A549 (cell line): ENCODE measurements at regions of chr16 and their contacts with region 1.

Region 1: DNA sequence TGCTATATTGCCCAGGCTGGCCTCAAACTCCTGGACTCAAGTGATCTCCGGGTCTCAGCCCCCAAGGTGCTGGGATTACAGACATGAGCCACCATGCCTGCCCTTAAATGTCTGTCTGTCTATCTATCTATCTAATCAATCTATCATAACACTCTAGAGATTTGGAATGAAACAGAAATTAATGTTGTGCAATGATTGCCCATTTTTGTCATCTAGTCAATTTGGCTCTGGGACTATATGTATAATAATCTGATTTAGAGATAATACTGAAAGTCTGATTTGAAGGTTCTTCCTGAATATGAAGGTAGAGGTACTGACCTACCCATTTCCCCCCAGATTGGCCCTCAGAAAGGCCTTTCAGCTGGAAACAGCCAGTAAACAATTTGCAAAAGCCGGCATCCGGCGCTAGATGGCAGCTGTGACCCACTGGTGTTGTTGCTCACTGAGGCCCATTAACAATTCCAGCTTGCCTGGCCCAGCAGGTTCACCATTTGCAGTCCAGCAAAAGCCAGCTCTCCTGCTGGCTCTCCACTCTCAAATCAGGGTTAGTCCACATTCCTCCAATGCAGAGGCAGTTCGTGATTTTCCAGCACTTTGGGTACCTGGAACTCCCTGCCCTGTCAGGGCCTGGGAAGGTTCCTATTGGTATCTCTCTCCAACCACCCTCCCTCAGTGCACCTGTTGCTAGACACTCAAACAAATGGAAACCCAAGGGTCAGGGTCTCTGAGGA is 22.9 kb upstream of the C16orf87 start:
- DNase-seq: peak; percentile 74 to 75
- ATAC-seq: peak; percentile 91
- H3K4me3 ChIP-seq: no peak overlapping the region
- H3K27ac ChIP-seq: no peak overlapping the region
- H3K4me1 ChIP-seq: no peaks in the 10 kb centered on the region
- CTCF ChIP-seq: peak; percentile 93
- EP300 ChIP-seq: no peak
- POLR2A ChIP-seq: no peak
- RAD21 ChIP-seq: peak; percentile 94 to 96

Region 2: GRCh38 chr16:46736695-46737094 is 117.2 kb before region 1 on chr16:
- CTCF ChIA-PET with region 1: no interaction called
- POLR2A ChIA-PET with region 1: no interaction called
- DNase-seq: no peak
- ATAC-seq: peak in 1 of 2 experiments; percentile 24; a peak in 1 of 6 replicates
- H3K4me3 ChIP-seq: no peak overlapping the region
- H3K27ac ChIP-seq: no peak overlapping the region
- H3K4me1 ChIP-seq: no peaks in the 10 kb centered on the region
- CTCF ChIP-seq: no peak
- EP300 ChIP-seq: no peak
- POLR2A ChIP-seq: no peak
- RAD21 ChIP-seq: no peak

Region 3: DNA sequence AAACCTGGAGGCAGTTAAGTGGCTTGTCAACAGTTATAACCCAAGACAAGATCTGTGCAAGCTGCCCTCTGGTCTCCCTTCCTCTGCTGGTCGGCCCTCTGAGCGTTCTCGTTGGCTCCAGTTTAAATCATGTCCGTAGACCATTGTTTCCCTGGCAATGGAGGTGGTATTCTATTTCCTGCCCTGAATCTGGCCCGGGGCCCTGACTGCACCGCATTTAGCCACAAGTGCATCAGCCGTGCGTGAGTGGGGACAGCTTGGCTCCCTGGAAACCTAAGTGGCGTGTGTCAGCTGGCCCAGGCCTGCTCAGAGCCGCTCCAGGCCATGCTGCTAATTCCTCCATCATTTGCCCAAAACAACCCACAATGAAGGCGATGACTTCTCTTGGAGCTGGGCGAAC is 90.7 kb before region 1 on chr16:
- CTCF ChIA-PET with region 1: no interaction called
- POLR2A ChIA-PET with region 1: no interaction called
- DNase-seq: no peak
- ATAC-seq: no peak; a peak in 1 of 6 replicates
- H3K4me3 ChIP-seq: no peak overlapping the region
- H3K27ac ChIP-seq: no peak overlapping the region
- H3K4me1 ChIP-seq: no peaks in the 10 kb centered on the region
- CTCF ChIP-seq: no peak
- EP300 ChIP-seq: no peak
- POLR2A ChIP-seq: no peak
- RAD21 ChIP-seq: no peak

Region 4: GRCh38 chr16:46883690-46884512 is 30.0 kb after region 1 on chr16 and contains the start of gene GPT2:
- CTCF ChIA-PET with region 1: interaction called, 47 read pairs
- POLR2A ChIA-PET with region 1: interaction called, 3 read pairs
- DNase-seq: peak; percentile 80 to 95
- ATAC-seq: peak; percentile 95 to 99
- H3K4me3 ChIP-seq: peak within 1 kb of the TSS; percentile 62
- H3K27ac ChIP-seq: peak within 1 kb of the TSS; percentile 88 to 92
- H3K4me1 ChIP-seq: peaks cover 18% of the 10 kb centered on the region; the same call in 2 of the 3 replicates
- CTCF ChIP-seq: no peak
- EP300 ChIP-seq: no peak
- POLR2A ChIP-seq: peak; percentile 73
- RAD21 ChIP-seq: no peak
- polyA plus RNA-seq, gene GPT2: 14.4 and 15.3 TPM in 2 replicates

Region 5: GRCh38 chr16:46899443-46900143 is 45.7 kb after region 1 on chr16:
- CTCF ChIA-PET with region 1: interaction called, 36 read pairs
- POLR2A ChIA-PET with region 1: no interaction called
- DNase-seq: no peak
- ATAC-seq: no peak
- H3K4me3 ChIP-seq: no peak overlapping the region
- H3K27ac ChIP-seq: no peak overlapping the region
- H3K4me1 ChIP-seq: no peaks in the 10 kb centered on the region
- CTCF ChIP-seq: no peak
- EP300 ChIP-seq: no peak
- POLR2A ChIP-seq: no peak
- RAD21 ChIP-seq: no peak

Region 6: DNA sequence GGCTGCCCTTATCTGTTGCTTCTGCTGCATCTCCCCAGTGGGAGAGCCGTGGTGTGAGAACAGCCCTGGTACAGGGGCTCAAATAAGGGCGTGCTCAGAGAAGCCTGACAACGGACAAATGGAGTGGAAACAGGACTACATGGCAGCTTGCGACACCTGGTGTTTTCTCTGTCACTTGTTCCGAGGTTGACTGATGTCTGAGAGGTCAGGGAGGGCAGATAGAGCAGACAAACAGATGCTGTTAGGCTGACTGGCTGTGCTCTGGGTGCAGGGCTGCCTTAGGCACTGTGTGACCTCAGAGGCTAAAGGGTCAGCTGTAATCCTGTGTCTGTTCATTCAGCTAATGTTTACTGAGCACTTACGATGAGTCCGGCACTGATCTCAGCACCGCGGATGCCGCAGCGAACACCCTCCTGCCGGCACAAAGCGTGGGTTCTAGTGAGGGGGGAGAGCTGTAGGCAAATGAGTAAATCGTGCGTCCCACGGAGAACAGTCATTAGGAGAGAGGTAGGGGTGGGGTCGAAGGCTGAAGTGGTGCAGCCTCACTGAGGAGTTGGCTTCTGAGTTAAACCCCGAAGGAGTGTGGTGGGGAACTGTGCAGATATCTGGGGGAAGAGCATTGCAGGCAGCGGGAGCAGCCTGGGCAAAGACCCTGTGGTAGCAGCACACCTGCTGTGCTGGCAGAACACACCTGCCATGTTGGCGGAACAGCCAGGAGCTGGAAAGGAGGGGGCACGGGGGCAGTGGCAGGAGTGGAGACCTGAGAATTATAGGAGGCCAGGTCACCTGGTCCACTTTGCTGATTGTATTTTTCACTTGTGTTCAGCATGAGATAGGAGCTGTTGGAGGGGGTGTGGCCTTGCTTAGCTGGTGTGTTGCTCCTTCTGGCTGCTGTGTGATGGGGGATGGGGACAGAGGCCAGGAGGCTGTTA is 65.2 kb after region 1 on chr16:
- CTCF ChIA-PET with region 1: interaction called, 202 read pairs
- POLR2A ChIA-PET with region 1: no interaction called
- DNase-seq: no peak
- ATAC-seq: no peak; a peak in 1 of 6 replicates
- H3K4me3 ChIP-seq: no peak overlapping the region
- H3K27ac ChIP-seq: no peak overlapping the region
- H3K4me1 ChIP-seq: no peaks in the 10 kb centered on the region
- CTCF ChIP-seq: no peak
- EP300 ChIP-seq: no peak
- POLR2A ChIP-seq: no peak
- RAD21 ChIP-seq: no peak